ENCODE measurements at regions of chr5 and their contacts with region 1.

Region 1: GRCh38 chr5:177403792-177404640 is 3.6 kb upstream of the PFN3 start:
- DNase-seq: peak; percentile 92
- H3K4me3 Mint-ChIP-seq: peak overlapping the region; percentile 77
- H3K27ac Mint-ChIP-seq: peak overlapping the region; percentile 67
- H3K4me1 Mint-ChIP-seq: peaks cover 9% of the 10 kb centered on the region
- H3K27me3 Mint-ChIP-seq: no peaks in the 10 kb centered on the region
- CTCF ChIP-seq: peak; percentile 90

Region 2: DNA sequence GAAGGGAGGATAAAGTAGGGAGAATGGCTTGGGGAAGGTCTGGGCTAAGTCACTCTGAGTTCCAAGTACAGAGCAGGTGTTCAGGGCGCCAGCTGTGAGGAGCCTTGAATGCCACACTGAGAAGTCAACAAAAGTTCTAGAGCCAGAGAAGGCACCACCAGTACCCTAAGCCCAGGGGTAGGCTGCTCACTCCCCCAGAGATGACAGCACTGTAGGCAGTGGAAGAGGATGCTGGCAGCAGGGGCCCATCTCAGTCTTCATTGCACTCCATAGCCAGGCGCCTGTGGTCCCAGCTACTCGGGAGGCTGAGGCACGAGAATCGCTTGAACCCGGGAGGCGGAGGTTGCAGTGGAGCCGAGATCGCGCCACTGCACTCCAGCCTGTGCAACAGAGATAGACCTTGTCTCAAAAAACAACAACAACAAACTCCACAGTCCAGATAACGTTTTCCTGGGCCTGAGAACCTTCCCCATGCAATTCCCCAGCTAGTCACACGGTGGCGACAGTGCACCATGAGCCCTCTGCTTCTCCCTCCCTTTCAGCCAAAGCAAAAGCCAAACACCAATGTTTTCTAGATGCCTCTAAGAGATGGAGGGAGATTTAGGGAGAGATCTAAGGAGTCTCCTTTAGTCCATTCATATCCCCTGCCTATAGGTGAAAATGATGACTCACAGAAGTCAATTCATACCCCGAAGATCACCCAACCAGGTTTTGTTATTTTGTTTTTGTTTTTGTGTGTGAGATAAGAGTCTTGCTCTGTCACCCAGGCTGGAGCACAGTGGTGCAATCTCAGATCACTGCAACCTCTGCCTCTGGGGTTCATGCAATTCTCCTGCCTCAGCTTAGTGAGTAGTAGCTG is 290.2 kb before region 1 on chr5:
- CTCF ChIA-PET with region 1: interaction called, 3 read pairs
- intact Hi-C with region 1: loop called (anchors 1 kb)
- DNase-seq: peak; percentile 85
- H3K4me3 Mint-ChIP-seq: no peak overlapping the region
- H3K27ac Mint-ChIP-seq: no peak overlapping the region
- H3K4me1 Mint-ChIP-seq: peaks cover 20% of the 10 kb centered on the region
- H3K27me3 Mint-ChIP-seq: no peaks in the 10 kb centered on the region
- CTCF ChIP-seq: peak; percentile 98

Region 3: GRCh38 chr5:177351385-177352329 is 52.4 kb before region 1 on chr5 and contains the start of gene LMAN2:
- CTCF ChIA-PET with region 1: interaction called, 16 read pairs
- intact Hi-C with region 1: no loop called
- DNase-seq: peak; percentile 94
- H3K4me3 Mint-ChIP-seq: peak within 1 kb of the TSS; percentile 86
- H3K27ac Mint-ChIP-seq: peak within 1 kb of the TSS; percentile 96
- H3K4me1 Mint-ChIP-seq: peaks cover 57% of the 10 kb centered on the region
- H3K27me3 Mint-ChIP-seq: no peaks in the 10 kb centered on the region
- CTCF ChIP-seq: no peak
- total RNA-seq, gene LMAN2: 278 and 305 TPM in 2 replicates

Region 4: GRCh38 chr5:177378884-177379883 is 24.8 kb before region 1 on chr5:
- CTCF ChIA-PET with region 1: interaction called, 29 read pairs
- intact Hi-C with region 1: no loop called
- DNase-seq: peak; percentile 67
- H3K4me3 Mint-ChIP-seq: peak overlapping the region; percentile 49
- H3K27ac Mint-ChIP-seq: peak overlapping the region; percentile 90
- H3K4me1 Mint-ChIP-seq: peaks cover 49% of the 10 kb centered on the region
- H3K27me3 Mint-ChIP-seq: no peaks in the 10 kb centered on the region
- CTCF ChIP-seq: no peak

Region 5: DNA sequence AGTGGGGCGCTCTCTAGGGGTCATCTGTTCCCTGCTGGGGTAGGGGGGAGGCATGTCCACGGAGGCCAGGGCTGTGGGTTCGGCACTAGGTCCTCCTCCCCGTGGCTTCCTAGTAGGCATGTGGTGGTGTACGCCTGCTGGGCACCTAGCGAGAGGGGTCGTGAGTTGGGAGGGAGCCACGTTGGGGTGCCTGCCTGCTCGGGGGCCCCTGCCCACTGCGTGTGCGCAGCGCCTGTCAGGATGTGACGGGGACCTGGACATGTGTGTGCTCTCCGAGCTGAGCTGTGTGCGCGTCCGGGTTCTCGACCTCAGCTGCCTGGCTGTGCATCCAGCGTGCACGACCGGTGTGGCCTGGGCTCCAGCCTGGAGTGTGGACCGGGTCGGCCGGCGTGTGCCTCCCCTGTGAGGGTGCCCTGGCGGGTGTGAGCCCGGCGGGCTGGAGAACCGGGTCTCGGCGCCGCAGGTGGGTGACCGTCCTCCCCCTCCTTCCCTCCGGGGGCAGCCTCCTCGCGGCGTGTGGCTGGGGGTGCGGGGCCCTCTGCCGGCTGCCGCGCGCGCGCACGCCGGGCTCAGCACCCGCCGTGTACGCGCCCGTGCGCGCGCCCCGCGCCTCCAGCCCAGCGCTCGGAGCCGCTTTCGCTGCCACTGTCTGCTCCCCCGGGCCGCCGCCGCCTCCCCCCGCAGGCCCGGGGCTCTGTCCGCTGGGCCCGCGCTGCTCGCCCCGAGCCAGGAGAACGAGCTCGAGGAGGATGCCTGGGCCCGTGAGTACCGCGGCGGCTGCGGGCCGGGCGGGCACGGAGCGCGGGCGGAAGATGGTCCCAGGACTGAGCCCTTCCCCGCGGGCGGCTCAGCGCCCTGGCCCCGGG is 42.4 kb after region 1 on chr5 and contains the start of gene PRR7:
- CTCF ChIA-PET with region 1: interaction called, 57 read pairs
- intact Hi-C with region 1: no loop called
- DNase-seq: peak; percentile 88
- H3K4me3 Mint-ChIP-seq: peak within 1 kb of the TSS; percentile 70
- H3K27ac Mint-ChIP-seq: peak within 1 kb of the TSS; percentile 81
- H3K4me1 Mint-ChIP-seq: peaks cover 22% of the 10 kb centered on the region
- H3K27me3 Mint-ChIP-seq: no peaks in the 10 kb centered on the region
- CTCF ChIP-seq: no peak
- total RNA-seq, gene PRR7: 25.2 and 27.6 TPM in 2 replicates

Region 6: DNA sequence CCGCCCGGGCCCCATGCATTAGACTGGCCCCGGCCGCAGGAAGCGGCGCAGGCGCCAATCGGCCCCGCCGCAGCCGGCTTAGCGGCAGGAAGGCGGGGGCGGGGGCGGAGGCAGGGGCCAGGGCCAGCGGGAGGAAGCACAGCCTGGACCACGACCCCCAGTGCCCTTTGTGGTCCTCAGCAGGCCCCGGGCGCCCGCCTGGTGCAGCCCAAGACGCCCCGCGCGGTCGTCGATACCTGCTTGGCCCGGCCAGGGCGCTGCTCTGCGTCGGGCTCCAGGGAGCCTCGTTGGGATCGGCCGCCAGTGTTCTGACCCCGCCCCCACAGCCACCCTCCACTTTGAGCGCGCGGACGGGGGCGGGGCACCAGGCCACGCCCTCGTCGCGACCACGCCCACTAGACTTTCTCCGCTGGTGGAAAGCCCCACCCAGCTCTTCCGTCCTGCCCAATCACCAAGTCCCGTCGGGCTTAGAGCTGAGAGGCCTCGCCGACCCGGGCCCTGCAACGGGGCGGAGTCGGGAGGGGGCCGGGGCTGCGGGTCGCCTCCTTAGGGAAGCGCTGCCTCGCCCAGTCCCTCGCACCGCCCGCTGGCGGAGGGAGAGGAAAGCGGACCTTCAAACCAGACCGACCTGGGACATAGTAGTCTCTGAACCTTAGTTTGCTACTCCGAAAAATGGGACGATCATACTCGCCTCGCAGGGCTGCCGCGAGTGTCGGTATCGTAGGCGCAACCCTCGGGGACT is 93.4 kb after region 1 on chr5 and contains the start of gene PDLIM7:
- CTCF ChIA-PET with region 1: interaction called, 12 read pairs
- intact Hi-C with region 1: loop called (anchors 2 kb)
- DNase-seq: peak; percentile 98
- H3K4me3 Mint-ChIP-seq: peak within 1 kb of the TSS; percentile 68
- H3K27ac Mint-ChIP-seq: peak within 1 kb of the TSS; percentile 78
- H3K4me1 Mint-ChIP-seq: peaks cover 32% of the 10 kb centered on the region
- H3K27me3 Mint-ChIP-seq: peaks cover 20% of the 10 kb centered on the region
- CTCF ChIP-seq: peak; percentile 31
- total RNA-seq, gene PDLIM7: 400 and 420 TPM in 2 replicates

Measured in Calu3 (cell line).